Endothelial cell of umbilical vein (primary cell): ENCODE measurements at regions of chr16 and their contacts with region 1.

Region 1: GRCh38 chr16:81204798-81205680 is 33.5 kb upstream of the BCO1 start:
- DNase-seq: peak; percentile 73
- H3K4me3 ChIP-seq: no peak overlapping the region
- H3K27ac ChIP-seq: no peak overlapping the region
- H3K4me1 ChIP-seq: no peaks in the 10 kb centered on the region
- H3K27me3 ChIP-seq: peaks cover 0 to 3% of the 10 kb centered on the region in 2 experiments
- CTCF ChIP-seq: peak; percentile 45 to 69
- POLR2A ChIP-seq: no peak

Region 2: GRCh38 chr16:81170824-81171223 is 34.2 kb before region 1 on chr16:
- CTCF ChIA-PET with region 1: no interaction called
- POLR2A ChIA-PET with region 1: no interaction called
- dilution Hi-C with region 1: no loop called
- intact Hi-C with region 1: no loop called
- DNase-seq: no peak
- H3K4me3 ChIP-seq: no peak overlapping the region
- H3K27ac ChIP-seq: no peak overlapping the region
- H3K4me1 ChIP-seq: no peaks in the 10 kb centered on the region
- H3K27me3 ChIP-seq: no peaks in the 10 kb centered on the region
- CTCF ChIP-seq: no peak
- POLR2A ChIP-seq: no peak

Region 3: DNA sequence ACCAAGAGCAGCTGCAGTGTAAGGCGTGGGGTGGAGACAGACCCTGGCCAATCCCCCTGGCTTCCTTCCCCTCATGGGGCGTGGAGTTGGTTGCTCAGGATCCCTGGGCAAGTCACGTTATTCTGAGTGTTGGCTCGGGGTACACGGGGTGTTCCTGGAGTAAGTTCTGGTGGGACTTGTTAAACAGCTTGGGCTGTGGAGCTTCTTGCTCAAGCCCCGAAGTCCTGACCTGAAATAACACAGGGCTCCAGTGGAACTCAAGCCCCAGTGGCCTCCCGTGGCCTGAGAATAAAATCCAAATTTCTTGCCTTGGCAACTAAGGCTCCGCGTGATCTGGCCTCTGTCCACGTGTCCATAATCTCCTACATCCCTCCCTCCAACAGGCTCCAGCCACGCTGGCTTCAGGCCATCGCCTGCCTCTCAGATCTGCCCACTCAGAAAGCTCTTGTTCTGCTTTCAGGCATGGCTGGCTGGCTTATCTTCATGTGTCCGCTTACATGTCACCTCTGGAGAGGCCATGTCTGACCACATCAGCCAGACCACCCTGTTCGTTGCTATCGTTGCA is 15.9 kb before region 1 on chr16:
- CTCF ChIA-PET with region 1: interaction called, 12 read pairs
- POLR2A ChIA-PET with region 1: no interaction called
- dilution Hi-C with region 1: no loop called
- intact Hi-C with region 1: no loop called
- DNase-seq: no peak
- H3K4me3 ChIP-seq: no peak overlapping the region
- H3K27ac ChIP-seq: no peak overlapping the region
- H3K4me1 ChIP-seq: no peaks in the 10 kb centered on the region
- H3K27me3 ChIP-seq: peaks cover 0 to 2% of the 10 kb centered on the region in 2 experiments
- CTCF ChIP-seq: no peak
- POLR2A ChIP-seq: no peak

Region 4: DNA sequence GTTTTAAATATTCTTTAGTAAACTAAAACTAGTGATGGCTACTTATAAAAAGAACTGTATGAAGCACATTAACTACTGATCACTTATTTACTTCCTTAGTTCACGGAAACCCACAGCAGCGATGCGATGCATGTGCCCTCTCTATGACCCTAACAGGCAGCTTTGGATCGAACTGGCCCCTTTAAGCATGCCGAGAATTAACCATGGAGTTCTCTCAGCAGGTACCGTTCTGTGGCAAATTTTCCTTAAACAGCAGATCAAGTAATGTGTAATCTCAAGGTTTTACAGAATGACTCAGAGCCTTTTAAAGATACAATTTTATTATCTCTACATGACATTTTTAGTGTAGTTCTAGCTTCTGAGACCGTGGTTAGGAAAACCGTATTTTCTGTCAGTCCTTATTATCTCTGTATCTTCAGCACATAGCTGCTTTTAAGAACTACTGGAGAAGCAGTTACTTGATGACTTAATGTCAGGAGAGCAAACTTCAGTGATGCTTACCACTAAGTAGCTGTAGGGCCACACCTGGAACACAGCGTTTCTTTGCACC is 152.7 kb after region 1 on chr16:
- CTCF ChIA-PET with region 1: interaction called, 5 read pairs
- POLR2A ChIA-PET with region 1: no interaction called
- dilution Hi-C with region 1: no loop called
- intact Hi-C with region 1: loop called (anchors 5 kb)
- DNase-seq: no peak
- H3K4me3 ChIP-seq: no peak overlapping the region
- H3K27ac ChIP-seq: no peak overlapping the region
- H3K4me1 ChIP-seq: no peaks in the 10 kb centered on the region
- H3K27me3 ChIP-seq: no peaks in the 10 kb centered on the region
- CTCF ChIP-seq: no peak
- POLR2A ChIP-seq: no peak

Region 5: GRCh38 chr16:82070656-82071369 is 865.8 kb after region 1 on chr16:
- CTCF ChIA-PET with region 1: no interaction called
- POLR2A ChIA-PET with region 1: no interaction called
- dilution Hi-C with region 1: no loop called
- intact Hi-C with region 1: no loop called
- DNase-seq: no peak
- H3K4me3 ChIP-seq: no peak overlapping the region
- H3K27ac ChIP-seq: no peak overlapping the region
- H3K4me1 ChIP-seq: no peaks in the 10 kb centered on the region
- H3K27me3 ChIP-seq: peaks cover 0 to 7% of the 10 kb centered on the region in 2 experiments
- CTCF ChIP-seq: no peak
- POLR2A ChIP-seq: no peak